ENCODE measurements at regions of chr20 and their contacts with region 1.

Region 1: DNA sequence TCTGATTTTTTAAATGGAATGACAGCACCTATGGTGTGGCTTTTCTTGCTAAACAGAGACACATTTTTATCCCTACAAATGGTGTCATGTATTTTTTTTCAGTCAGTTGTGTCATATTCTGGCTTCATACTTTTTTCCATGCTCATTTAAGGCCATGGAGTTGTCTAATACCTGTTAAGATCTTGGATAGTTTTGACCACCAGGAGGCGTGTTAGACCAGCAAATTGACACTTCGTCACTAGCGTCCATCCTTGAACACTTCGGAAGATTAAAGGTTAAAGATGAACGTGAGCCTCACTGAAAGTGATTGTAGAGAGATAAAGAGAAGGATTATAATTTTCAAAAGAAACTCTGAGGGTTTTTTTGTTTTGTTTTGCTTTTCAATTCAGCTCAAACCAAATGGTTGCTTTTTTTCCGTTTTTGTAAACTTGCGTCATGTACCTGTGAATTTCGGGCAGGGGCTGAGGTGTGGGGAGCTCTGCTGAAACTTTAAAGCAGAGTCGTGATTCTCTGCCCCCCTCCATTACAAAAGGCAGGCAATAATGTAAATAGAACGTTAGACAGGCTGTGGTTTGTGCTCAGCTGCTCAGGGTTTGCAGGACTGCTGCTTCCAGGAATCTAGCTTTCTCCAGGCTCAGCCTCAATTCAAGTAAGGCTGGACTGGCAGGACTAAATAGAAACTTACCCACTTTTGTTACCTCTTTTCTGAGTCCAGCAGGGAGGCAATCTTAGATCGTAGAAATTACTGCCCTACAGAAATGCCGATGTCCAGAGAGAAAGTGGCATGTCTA is 245.1 kb downstream of the FOXA2 start:
- DNase-seq: peak; percentile 66
- H3K4me3 Mint-ChIP-seq: no peak overlapping the region
- H3K27ac Mint-ChIP-seq: no peak overlapping the region
- H3K4me1 Mint-ChIP-seq: peaks cover 1% of the 10 kb centered on the region
- H3K27me3 Mint-ChIP-seq: peaks cover 6% of the 10 kb centered on the region

Region 2: DNA sequence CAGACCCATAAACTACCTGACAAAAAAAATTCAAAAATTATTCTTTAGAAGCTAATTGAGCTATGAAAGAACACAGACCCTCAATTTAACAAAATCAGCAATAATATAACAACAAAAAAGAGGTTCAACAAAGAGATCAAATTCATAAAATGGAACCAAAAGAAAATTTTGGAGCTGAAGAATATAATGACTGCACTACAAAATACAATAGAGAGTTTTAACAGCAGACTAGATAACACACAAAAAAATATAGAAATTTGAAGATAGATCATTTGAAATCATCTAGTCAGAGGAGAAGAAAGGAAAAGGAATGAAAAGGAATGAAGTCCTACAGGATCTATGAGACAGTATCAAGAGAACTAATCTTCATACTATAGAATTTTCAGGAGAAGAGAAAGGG is 211.7 kb before region 1 on chr20:
- CTCF ChIA-PET with region 1: no interaction called
- intact Hi-C with region 1: no loop called
- DNase-seq: no peak
- H3K4me3 Mint-ChIP-seq: no peak overlapping the region
- H3K27ac Mint-ChIP-seq: no peak overlapping the region
- H3K4me1 Mint-ChIP-seq: no peaks in the 10 kb centered on the region
- H3K27me3 Mint-ChIP-seq: no peaks in the 10 kb centered on the region

Region 3: DNA sequence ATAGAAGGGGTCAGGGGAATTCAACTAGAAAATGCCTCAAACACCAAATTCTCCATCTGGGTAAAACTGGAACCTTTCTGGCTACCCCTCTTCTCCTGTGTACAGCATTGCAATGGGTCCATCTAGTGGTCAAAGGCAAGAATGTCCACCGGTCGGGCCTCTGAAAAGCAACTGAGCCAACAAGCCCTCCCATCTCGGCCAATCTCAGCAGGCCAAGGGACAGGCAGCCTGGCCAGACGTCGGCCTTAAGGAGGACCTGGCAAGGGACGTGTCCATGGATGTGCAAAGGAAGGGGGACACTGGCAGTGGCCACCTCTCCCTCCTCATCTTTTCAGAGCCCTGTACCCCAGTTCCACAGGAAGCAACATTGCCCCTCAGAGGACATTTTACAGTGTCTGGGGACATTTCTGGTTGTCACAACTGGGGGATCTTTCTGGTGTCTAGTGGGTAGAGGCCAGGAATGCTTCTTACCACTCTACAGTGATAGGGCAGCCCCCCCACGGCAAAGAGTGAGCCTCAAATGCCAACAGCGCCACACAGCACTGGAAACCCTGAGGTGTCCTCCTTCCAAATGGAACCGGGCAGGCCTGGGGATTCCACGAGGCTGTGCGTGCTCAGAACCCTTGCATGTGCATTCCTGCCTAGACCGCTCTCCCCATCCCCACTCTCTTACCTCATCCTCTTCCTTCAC is 344.9 kb after region 1 on chr20:
- CTCF ChIA-PET with region 1: interaction called, 13 read pairs
- intact Hi-C with region 1: loop called (anchors 1 kb)
- DNase-seq: peak; percentile 57
- H3K4me3 Mint-ChIP-seq: no peak overlapping the region
- H3K27ac Mint-ChIP-seq: no peak overlapping the region
- H3K4me1 Mint-ChIP-seq: no peaks in the 10 kb centered on the region
- H3K27me3 Mint-ChIP-seq: peaks cover 6% of the 10 kb centered on the region

Region 4: GRCh38 chr20:22691369-22692118 is 352.3 kb after region 1 on chr20:
- CTCF ChIA-PET with region 1: interaction called, 13 read pairs
- intact Hi-C with region 1: no loop called
- DNase-seq: peak; percentile 64
- H3K4me3 Mint-ChIP-seq: no peak overlapping the region
- H3K27ac Mint-ChIP-seq: no peak overlapping the region
- H3K4me1 Mint-ChIP-seq: no peaks in the 10 kb centered on the region
- H3K27me3 Mint-ChIP-seq: peaks cover 6% of the 10 kb centered on the region

Region 5: GRCh38 chr20:23235173-23236027 is 896.1 kb after region 1 on chr20:
- CTCF ChIA-PET with region 1: no interaction called
- intact Hi-C with region 1: loop called (anchors 5 kb)
- DNase-seq: peak; percentile 48
- H3K4me3 Mint-ChIP-seq: no peak overlapping the region
- H3K27ac Mint-ChIP-seq: no peak overlapping the region
- H3K4me1 Mint-ChIP-seq: no peaks in the 10 kb centered on the region
- H3K27me3 Mint-ChIP-seq: peaks cover 8% of the 10 kb centered on the region

Region 6: DNA sequence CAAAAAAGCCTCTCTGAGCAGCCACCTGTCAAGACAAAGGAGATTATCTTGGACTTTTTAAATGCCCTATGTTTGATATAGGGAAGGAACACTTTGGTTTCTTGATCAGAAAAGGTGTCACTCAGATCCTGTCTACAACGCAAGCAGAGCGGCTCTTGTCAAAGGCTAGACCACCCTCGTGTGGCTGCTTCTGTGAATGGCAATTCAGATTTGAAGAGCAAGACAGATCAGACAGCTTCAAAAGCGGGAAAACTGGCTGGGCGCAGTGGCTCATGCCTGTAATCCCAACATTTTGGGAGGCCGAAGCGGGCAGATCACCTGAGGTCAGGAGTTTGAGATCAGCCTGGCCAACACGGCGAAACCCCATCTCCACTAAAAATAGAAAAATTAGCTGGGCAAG is 1001.2 kb after region 1 on chr20:
- CTCF ChIA-PET with region 1: interaction called, 3 read pairs
- intact Hi-C with region 1: loop called (anchors 2 kb)
- DNase-seq: peak; percentile 55
- H3K4me3 Mint-ChIP-seq: no peak overlapping the region
- H3K27ac Mint-ChIP-seq: no peak overlapping the region
- H3K4me1 Mint-ChIP-seq: no peaks in the 10 kb centered on the region
- H3K27me3 Mint-ChIP-seq: no peaks in the 10 kb centered on the region

Region 7: DNA sequence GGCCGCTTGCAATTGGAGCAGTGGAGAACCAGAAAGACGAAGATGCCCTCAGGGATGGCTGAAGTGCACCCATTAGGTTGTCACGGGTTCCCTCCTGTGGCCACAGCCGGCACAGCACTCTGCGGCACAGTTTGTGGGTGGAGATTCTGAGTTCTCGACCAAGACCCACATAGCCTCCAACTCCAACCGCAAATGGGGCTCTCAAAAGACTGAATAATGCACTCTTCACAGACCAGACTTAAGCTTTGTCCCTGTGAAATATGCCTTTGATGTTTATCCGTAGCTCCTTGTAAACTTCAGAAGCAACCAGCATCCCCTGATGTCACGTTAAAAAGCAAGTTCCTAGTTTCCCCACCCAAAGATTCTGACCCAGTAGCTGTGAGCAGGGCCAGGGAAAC is 1267.4 kb after region 1 on chr20:
- CTCF ChIA-PET with region 1: no interaction called
- intact Hi-C with region 1: loop called (anchors 5 kb)
- DNase-seq: peak; percentile 77
- H3K4me3 Mint-ChIP-seq: no peak overlapping the region
- H3K27ac Mint-ChIP-seq: no peak overlapping the region
- H3K4me1 Mint-ChIP-seq: no peaks in the 10 kb centered on the region
- H3K27me3 Mint-ChIP-seq: peaks cover 6% of the 10 kb centered on the region